MCF 10A (cell line): ENCODE measurements at regions of chr3 and their contacts with region 1.

Region 1: DNA sequence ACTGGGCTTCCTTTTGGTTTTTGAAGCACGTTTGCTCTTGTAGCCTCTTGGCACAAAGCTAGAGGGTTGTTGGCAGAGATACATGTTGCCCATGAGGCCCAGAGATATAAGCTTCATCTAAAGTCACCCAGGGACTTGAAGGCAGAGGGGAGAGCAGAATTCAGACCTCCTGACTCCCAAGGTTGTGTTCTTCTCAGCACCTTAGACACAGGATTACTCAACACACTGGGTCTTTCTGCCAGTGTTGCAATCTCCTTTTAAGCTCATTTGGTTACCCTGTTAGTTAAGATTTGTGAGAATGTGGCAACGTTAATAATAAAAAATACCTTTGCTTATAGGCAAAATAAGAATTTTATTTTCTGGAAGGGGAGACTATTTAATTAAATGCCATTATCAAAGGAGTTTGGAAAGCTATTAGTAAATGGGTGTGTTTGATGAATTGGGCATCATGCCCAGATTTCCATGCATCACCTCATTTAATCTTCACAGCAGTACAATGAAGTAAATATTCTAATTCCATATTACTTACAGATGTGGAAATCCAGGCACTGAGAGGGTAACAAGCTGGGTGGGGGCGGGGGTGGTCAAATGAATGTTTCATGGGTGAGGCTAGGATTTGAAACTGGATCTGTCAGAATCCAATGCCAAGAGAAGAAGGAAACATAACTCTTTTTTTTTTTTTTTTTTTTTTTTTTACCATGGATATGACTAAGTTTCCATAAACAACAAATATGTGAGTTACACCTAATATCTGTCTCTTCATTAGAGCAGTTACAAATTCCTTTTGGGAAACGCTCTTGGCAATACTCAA is 183.3 kb downstream of the NR1D2 start:
- DNase-seq: peak; percentile 90
- H3K4me3 Mint-ChIP-seq: peak overlapping the region; percentile 19
- H3K27ac Mint-ChIP-seq: peak overlapping the region; percentile 88
- H3K4me1 Mint-ChIP-seq: peaks cover 31% of the 10 kb centered on the region
- H3K27me3 Mint-ChIP-seq: no peaks in the 10 kb centered on the region
- CTCF ChIP-seq: no peak

Region 2: DNA sequence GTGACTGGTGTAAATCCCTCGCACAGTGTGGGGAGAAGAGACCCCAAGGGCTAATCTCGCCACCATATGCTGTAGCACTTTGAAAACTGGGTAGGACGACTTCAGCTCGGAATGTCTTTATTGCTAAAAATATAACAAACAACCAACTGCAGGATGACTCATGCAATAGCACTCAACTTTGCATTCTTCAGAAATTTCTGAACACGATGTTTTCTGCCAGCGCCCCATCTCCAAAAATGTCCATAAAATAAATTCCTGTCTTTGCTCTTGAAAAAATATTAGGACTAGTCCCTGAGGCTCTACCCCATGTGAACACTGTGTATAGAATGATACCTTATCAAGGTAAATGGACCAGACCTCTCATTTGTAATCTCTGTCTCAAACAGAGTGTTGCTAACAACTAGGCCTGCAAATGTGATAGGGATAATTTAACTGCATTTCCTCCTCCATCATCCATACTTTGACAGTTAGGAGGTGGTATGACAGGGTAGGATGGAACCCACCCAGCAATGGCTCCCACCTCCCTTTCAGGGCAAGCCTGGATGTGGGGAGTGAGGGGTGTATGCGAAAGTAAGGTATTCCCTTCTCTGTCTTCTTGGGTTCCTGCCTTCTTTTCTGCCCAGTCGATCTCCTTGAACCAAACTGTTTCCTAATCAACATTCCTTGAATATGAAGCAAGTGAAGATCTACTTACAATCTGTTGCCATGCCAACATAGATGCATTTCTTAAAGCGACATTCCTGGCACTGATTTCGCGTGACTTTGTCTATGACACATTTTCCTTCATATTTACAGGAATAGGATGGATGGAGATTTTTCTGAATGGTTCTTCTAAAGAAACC is 17.8 kb after region 1 on chr3:
- CTCF ChIA-PET with region 1: no interaction called
- POLR2A ChIA-PET with region 1: interaction called, 14 read pairs
- intact Hi-C with region 1: no loop called
- DNase-seq: peak; percentile 76
- H3K4me3 Mint-ChIP-seq: peak overlapping the region; percentile 61
- H3K27ac Mint-ChIP-seq: peak overlapping the region; percentile 98
- H3K4me1 Mint-ChIP-seq: peaks cover 23% of the 10 kb centered on the region
- H3K27me3 Mint-ChIP-seq: no peaks in the 10 kb centered on the region
- CTCF ChIP-seq: no peak